ENCODE measurements at regions of chr7 and their contacts with region 1.

Region 1: GRCh38 chr7:117385340-117386109 is 41.8 kb downstream of the ASZ1 start:
- DNase-seq: peak; percentile 37
- ATAC-seq: peak; percentile 89
- H3K4me3 ChIP-seq: peak overlapping the region in 1 of 2 experiments; percentile 29; a peak in 2 of 4 replicates
- H3K27ac ChIP-seq: no peak overlapping the region
- H3K4me1 ChIP-seq: peaks cover 4 to 12% of the 10 kb centered on the region in 2 experiments; a peak in 3 of 4 replicates
- H3K27me3 ChIP-seq: no peaks in the 10 kb centered on the region
- CTCF ChIP-seq: peak; percentile 30 to 62 (median 59); a peak in 5 of 6 replicates
- POLR2A ChIP-seq: no peak
- RAD21 ChIP-seq: peak; percentile 71

Region 2: GRCh38 chr7:116929914-116930913 is 455.3 kb before region 1 on chr7:
- CTCF ChIA-PET with region 1: no interaction called
- POLR2A ChIA-PET with region 1: no interaction called
- RAD21 ChIA-PET with region 1: no interaction called
- intact Hi-C with region 1: loop called (anchors 1 kb)
- DNase-seq: peak; percentile 69
- ATAC-seq: peak; percentile 96
- H3K4me3 ChIP-seq: peak overlapping the region in 1 of 2 experiments; percentile 15; a peak in 1 of 4 replicates
- H3K27ac ChIP-seq: no peak overlapping the region
- H3K4me1 ChIP-seq: peaks cover 0 to 6% of the 10 kb centered on the region in 2 experiments; a peak in 2 of 4 replicates
- H3K27me3 ChIP-seq: no peaks in the 10 kb centered on the region
- CTCF ChIP-seq: peak; percentile 84 to 93 (median 86)
- POLR2A ChIP-seq: no peak
- RAD21 ChIP-seq: peak; percentile 89

Region 3: DNA sequence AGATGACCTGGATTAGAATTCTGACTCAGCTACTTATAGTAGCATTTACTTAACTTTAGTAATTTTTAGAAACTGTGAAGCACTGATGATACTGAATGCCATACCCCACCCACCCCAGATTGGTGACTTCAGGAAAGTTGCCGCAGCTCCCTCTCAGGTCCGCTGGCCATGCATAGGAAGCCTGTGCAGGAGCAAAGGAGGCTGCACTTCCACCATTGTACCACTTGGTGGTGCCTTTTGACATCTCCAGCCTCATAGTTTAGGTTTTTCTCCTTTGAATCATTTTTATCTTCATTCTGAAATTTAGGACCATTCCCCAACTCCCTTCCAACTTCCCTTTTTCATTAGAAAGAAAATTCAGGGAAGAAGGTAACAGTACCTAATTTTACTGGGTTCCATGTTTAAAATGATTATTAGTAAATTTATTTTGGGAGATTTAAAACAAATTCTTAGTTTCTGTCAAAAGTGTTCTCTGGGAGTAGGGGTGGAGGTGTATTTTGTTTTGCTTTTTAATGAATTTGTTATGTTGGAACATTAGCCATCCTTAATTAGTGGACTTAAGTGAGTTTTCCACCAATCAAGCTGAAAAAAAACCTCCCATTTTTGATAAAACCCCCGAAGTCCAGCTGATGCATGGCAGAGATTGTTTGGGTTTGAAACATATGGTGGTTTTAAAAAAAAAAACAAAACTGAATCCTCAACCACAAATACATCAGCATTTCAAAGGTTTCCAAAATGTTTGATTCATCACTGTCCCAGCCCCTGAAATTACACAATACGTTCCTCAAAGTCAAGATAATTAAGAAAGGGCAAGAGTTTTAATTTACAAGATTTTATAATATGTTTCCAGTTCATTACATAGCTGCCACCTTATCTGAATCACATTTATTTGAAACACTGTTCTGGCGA is 172.3 kb before region 1 on chr7:
- CTCF ChIA-PET with region 1: no interaction called
- POLR2A ChIA-PET with region 1: no interaction called
- RAD21 ChIA-PET with region 1: interaction called in 1 of 2 experiments, 3 read pairs
- intact Hi-C with region 1: loop called (anchors 1 kb)
- DNase-seq: peak; percentile 51
- ATAC-seq: peak; percentile 79
- H3K4me3 ChIP-seq: no peak overlapping the region
- H3K27ac ChIP-seq: no peak overlapping the region
- H3K4me1 ChIP-seq: no peaks in the 10 kb centered on the region
- H3K27me3 ChIP-seq: no peaks in the 10 kb centered on the region
- CTCF ChIP-seq: peak; percentile 55 to 93 (median 90); a peak in 5 of 6 replicates
- POLR2A ChIP-seq: no peak
- RAD21 ChIP-seq: peak; percentile 67

Region 4: GRCh38 chr7:117312598-117313580 is 72.6 kb before region 1 on chr7:
- CTCF ChIA-PET with region 1: no interaction called
- POLR2A ChIA-PET with region 1: no interaction called
- RAD21 ChIA-PET with region 1: no interaction called
- intact Hi-C with region 1: loop called (anchors 5 kb)
- DNase-seq: no peak
- ATAC-seq: no peak
- H3K4me3 ChIP-seq: no peak overlapping the region
- H3K27ac ChIP-seq: no peak overlapping the region
- H3K4me1 ChIP-seq: no peaks in the 10 kb centered on the region
- H3K27me3 ChIP-seq: no peaks in the 10 kb centered on the region
- CTCF ChIP-seq: peak; percentile 36 to 56 (median 52); a peak in 5 of 6 replicates
- POLR2A ChIP-seq: no peak
- RAD21 ChIP-seq: peak; percentile 58

Measured in HCT116 (cell line).